Dendritic cell treated with granulocyte-macrophage colony-stimulating factor and Interleukin-4, amounts not matched to agents 40 ng/mL and 50 ng/mL, for 4 days (primary cell): ENCODE measurements at regions of chr10 and their contacts with region 1.

Region 1: DNA sequence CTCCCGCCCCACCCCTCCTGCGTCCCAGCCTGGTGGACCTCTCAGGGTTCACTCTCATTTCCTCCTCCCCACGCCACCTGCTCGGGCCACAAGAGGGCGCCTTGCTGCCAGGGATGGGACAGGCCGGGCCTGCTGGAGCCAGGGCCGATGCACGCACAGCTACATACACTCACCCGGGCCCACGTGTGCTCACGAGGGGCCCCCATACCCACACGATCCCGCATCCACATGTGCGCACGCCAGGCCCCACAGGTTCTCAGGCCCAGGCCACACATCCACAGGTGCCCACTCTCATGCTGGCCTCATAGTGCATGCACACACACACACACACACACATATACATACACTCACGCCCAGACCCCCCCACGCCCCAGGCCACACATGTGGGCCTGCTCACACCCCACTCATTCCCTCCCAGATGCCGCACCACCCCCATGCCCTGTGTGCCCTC is 68.6 kb downstream of the LHPP start:
- H3K4me3 Mint-ChIP-seq: no peak overlapping the region
- H3K27ac Mint-ChIP-seq: no peak overlapping the region
- H3K4me1 Mint-ChIP-seq: peaks cover 20% of the 10 kb centered on the region
- H3K27me3 Mint-ChIP-seq: no peaks in the 10 kb centered on the region

Region 2: DNA sequence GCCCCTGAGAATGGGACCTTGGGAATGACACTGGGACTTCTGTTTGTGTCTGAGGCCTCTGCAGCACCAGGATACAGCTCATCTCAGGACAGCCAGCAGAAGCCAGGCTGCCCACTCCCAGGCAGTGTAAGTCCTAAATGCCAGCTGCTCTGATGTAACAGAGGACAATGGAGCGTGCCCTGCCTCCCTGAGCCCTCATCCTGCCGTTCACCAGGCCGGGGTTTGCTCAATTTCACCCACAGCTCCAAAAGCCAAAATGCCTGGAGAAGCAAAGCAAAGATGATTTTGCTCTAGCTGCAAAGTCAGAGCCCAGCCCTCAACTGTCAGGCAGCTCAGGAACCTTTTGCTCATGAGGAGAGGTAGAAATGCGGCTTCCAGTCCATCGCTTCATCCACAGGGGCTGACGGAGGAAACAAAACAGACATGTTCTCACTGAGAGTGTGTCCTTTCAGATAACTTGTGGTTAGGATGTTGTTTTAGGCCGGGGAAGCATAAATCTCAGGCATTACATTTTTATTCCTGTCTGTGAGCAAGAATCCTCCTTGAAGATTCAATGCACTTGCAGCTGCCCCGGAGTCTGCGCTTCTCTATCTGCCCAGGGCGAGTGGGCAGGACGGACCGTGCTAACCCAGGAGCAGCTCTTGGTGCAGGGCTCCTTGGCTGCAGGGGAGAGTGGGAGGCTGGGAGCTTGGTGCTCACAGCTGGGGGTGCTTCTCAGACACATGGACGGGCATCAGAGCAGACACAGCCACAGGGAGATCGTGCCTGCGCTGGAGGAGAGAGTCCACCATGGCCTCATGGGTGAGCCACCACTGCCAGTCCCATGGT is 353.7 kb before region 1 on chr10:
- intact Hi-C with region 1: no loop called
- H3K4me3 Mint-ChIP-seq: no peak overlapping the region
- H3K27ac Mint-ChIP-seq: no peak overlapping the region
- H3K4me1 Mint-ChIP-seq: peaks cover 31% of the 10 kb centered on the region
- H3K27me3 Mint-ChIP-seq: peaks cover 41% of the 10 kb centered on the region

Region 3: GRCh38 chr10:124626759-124627380 is 96.6 kb after region 1 on chr10:
- intact Hi-C with region 1: loop called (anchors 10 kb)
- H3K4me3 Mint-ChIP-seq: no peak overlapping the region
- H3K27ac Mint-ChIP-seq: peak overlapping the region; percentile 28
- H3K4me1 Mint-ChIP-seq: peaks cover 62% of the 10 kb centered on the region
- H3K27me3 Mint-ChIP-seq: no peaks in the 10 kb centered on the region

Region 4: GRCh38 chr10:124827474-124827873 is 297.2 kb after region 1 on chr10:
- intact Hi-C with region 1: loop called (anchors 2 kb)
- H3K4me3 Mint-ChIP-seq: no peak overlapping the region
- H3K27ac Mint-ChIP-seq: no peak overlapping the region
- H3K4me1 Mint-ChIP-seq: no peaks in the 10 kb centered on the region
- H3K27me3 Mint-ChIP-seq: no peaks in the 10 kb centered on the region